Posterior vena cava (tissue), 2 donors: ENCODE measurements at regions of chr9 and their contacts with region 1.

Region 1: DNA sequence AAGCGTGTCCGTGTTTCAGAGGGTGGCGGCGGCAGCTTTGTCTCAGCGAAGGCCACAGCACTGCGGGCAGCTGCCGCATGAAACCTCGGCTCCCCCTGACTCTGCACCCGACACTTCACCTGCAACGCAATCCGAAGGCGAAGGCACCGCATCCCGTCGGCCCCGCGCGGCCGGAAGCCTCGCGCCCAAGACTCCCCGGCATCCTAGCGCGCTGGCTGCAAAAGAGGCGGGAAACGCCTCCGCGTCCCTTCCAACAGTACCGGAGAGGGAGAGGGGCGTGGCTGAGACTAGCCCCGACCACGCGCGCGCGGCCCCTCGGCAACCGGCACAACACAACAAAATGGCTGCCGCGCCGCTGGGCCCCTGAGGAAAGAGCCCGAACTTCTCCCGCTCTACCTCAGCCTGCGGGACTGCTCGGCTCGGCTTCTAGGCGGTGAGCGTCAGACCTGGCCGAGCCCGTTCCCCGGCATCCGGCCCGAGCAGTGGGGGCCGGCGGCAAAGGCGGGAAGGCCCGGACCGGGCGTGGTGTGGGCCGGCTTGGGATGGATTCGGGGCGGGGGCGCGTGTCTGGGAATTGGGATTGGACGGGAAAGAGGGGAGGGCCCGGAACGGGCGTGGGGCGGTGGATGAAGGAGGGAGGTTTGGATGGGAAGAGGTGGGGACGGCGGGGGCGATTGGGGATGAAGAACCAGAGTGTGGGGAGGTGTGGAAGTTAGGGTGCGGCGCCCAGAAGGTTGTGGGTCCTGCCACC is at the start of gene CNTRL:
- DNase-seq: peak; percentile 97
- total RNA-seq, gene CNTRL: 13.6 to 15.2 TPM

Region 2: GRCh38 chr9:121783521-121784507 is 709.0 kb after region 1 on chr9:
- intact Hi-C with region 1: loop called in 1 of 2 experiments (anchors 5 kb)
- DNase-seq: peak; percentile 73